Vagina (tissue), 2 donors: ENCODE measurements at regions of chr9 and their contacts with region 1.

Region 1: DNA sequence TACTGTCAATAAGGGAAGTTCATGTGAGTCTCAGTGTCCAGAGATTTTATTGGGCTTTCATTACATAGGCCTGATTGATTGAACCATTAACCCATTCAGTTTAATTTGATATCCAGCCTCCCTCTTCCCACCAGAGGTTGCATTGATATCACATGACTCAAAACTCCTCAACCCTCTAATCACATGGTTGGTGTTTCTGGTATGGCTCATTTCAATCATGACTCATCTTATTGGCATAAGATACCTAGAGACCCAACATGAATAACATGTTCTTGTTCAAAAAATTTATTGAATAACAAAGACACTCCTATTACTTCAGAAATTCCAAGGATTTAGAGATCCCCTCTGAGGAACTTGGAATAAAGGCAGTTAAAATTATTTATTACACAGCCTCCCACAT is 982.2 kb downstream of the TLE1 start:
- DNase-seq: no peak
- H3K4me3 ChIP-seq: no peak overlapping the region
- H3K27ac ChIP-seq: no peak overlapping the region
- H3K4me1 ChIP-seq: no peaks in the 10 kb centered on the region
- H3K27me3 ChIP-seq: no peaks in the 10 kb centered on the region
- CTCF ChIP-seq: no peak
- POLR2A ChIP-seq: no peak

Region 2: DNA sequence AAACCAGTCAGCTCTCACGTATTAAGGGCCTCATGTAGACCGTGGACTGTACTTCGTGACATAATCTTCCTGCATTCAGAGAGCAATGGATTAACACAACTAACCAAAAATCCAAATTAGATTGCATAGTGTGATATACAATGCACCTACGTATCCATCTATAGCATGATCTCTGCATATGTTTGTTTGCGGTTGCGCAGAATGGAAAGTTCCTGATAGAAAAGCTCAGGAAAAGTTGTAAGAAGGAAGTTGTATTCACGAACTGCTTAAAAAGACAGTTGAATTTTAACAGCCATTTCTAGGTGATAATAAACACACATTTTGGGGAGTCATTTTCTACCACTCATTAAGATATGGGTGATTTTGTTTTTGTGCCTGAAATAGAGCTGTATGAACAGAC is 266.4 kb before region 1 on chr9:
- intact Hi-C with region 1: no loop called
- DNase-seq: no peak
- H3K4me3 ChIP-seq: no peak overlapping the region
- H3K27ac ChIP-seq: no peak overlapping the region
- H3K4me1 ChIP-seq: no peaks in the 10 kb centered on the region
- H3K27me3 ChIP-seq: no peaks in the 10 kb centered on the region
- CTCF ChIP-seq: no peak
- POLR2A ChIP-seq: no peak

Region 3: GRCh38 chr9:80899208-80899607 is 192.1 kb after region 1 on chr9:
- intact Hi-C with region 1: loop called (anchors 5 kb)
- DNase-seq: no peak
- H3K4me3 ChIP-seq: no peak overlapping the region
- H3K27ac ChIP-seq: no peak overlapping the region
- H3K4me1 ChIP-seq: no peaks in the 10 kb centered on the region
- H3K27me3 ChIP-seq: no peaks in the 10 kb centered on the region
- CTCF ChIP-seq: no peak
- POLR2A ChIP-seq: no peak